ENCODE measurements at regions of chr11 and their contacts with region 1.

Region 1: GRCh38 chr11:59901306-59901705 is 22.7 kb downstream of the OOSP3 start:
- DNase-seq: peak; percentile 98
- H3K4me3 ChIP-seq: peak overlapping the region in 1 of 3 experiments; percentile 38
- H3K27ac ChIP-seq: peak overlapping the region; percentile 95
- H3K4me1 ChIP-seq: peaks cover 15% of the 10 kb centered on the region
- H3K27me3 ChIP-seq: no peaks in the 10 kb centered on the region
- CTCF ChIP-seq: no peak
- POLR2A ChIP-seq: no peak

Region 2: GRCh38 chr11:59865031-59865430 is 36.3 kb before region 1 on chr11:
- CTCF ChIA-PET with region 1: interaction called, 6 read pairs
- POLR2A ChIA-PET with region 1: no interaction called
- dilution Hi-C with region 1: no loop called
- intact Hi-C with region 1: loop called (anchors 2 kb)
- DNase-seq: peak; percentile 95
- H3K4me3 ChIP-seq: no peak overlapping the region
- H3K27ac ChIP-seq: peak overlapping the region; percentile 44
- H3K4me1 ChIP-seq: peaks cover 15% of the 10 kb centered on the region
- H3K27me3 ChIP-seq: no peaks in the 10 kb centered on the region
- CTCF ChIP-seq: no peak
- POLR2A ChIP-seq: no peak

Region 3: GRCh38 chr11:60159868-60160267 is 258.6 kb after region 1 on chr11:
- CTCF ChIA-PET with region 1: no interaction called
- POLR2A ChIA-PET with region 1: no interaction called
- dilution Hi-C with region 1: no loop called
- intact Hi-C with region 1: loop called (anchors 2 kb)
- DNase-seq: peak; percentile 93
- H3K4me3 ChIP-seq: no peak overlapping the region
- H3K27ac ChIP-seq: peak overlapping the region; percentile 96
- H3K4me1 ChIP-seq: peaks cover 40% of the 10 kb centered on the region
- H3K27me3 ChIP-seq: no peaks in the 10 kb centered on the region
- CTCF ChIP-seq: no peak
- POLR2A ChIP-seq: peak; percentile 76

Region 4: GRCh38 chr11:60274416-60274815 is 373.1 kb after region 1 on chr11:
- CTCF ChIA-PET with region 1: no interaction called
- POLR2A ChIA-PET with region 1: no interaction called
- dilution Hi-C with region 1: no loop called
- intact Hi-C with region 1: no loop called
- DNase-seq: no peak
- H3K4me3 ChIP-seq: no peak overlapping the region
- H3K27ac ChIP-seq: no peak overlapping the region
- H3K4me1 ChIP-seq: no peaks in the 10 kb centered on the region
- H3K27me3 ChIP-seq: no peaks in the 10 kb centered on the region
- CTCF ChIP-seq: no peak
- POLR2A ChIP-seq: no peak